Breast epithelium (tissue), 4 donors: ENCODE measurements at regions of chr2 and their contacts with region 1.

Region 1: GRCh38 chr2:98538280-98539041 is 69.9 kb downstream of the COA5 start:
- DNase-seq: no peak
- H3K4me3 ChIP-seq: no peak overlapping the region
- H3K27ac ChIP-seq: no peak overlapping the region
- H3K4me1 ChIP-seq: no peaks in the 10 kb centered on the region
- H3K27me3 ChIP-seq: no peaks in the 10 kb centered on the region
- CTCF ChIP-seq: no peak
- POLR2A ChIP-seq: no peak

Region 2: DNA sequence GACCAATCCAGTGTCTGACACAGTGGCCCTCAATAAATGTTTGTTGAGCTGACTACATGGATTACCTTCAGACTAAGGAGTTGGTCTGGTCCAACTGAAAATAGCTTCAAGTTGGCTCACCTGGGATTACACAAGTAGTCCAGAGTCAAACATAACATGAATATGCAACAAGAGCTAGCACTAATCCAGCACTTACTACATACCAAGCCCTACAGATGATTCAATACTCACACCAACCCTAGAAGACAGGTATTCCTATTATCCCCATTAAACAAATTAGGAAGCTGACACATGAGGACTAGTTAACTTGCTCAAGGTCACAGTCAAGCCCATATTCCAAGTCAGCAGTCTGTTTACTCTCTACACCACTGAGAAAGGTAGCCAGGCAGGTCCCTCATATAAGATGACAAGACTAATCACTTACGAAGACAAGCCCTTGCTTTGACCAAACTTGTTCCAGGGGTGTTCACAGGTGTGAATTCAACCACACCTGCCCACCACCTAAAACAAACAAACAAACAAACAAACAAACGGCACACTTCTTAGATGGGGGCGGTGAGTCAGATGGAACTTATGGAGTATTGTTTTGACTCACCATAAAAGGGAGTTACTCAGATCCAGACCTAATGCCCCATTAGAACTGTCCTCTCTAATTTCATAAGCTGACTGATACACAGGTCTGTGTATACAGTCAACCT is 571.8 kb before region 1 on chr2:
- intact Hi-C with region 1: no loop called
- DNase-seq: no peak
- H3K4me3 ChIP-seq: no peak overlapping the region
- H3K27ac ChIP-seq: no peak overlapping the region
- H3K4me1 ChIP-seq: no peaks in the 10 kb centered on the region
- H3K27me3 ChIP-seq: no peaks in the 10 kb centered on the region
- CTCF ChIP-seq: no peak
- POLR2A ChIP-seq: no peak

Region 3: GRCh38 chr2:98234776-98235175 is 303.7 kb before region 1 on chr2:
- intact Hi-C with region 1: no loop called
- DNase-seq: no peak
- H3K4me3 ChIP-seq: no peak overlapping the region
- H3K27ac ChIP-seq: no peak overlapping the region
- H3K4me1 ChIP-seq: no peaks in the 10 kb centered on the region
- H3K27me3 ChIP-seq: no peaks in the 10 kb centered on the region
- CTCF ChIP-seq: no peak
- POLR2A ChIP-seq: no peak

Region 4: GRCh38 chr2:98559581-98559980 is 21.1 kb after region 1 on chr2:
- intact Hi-C with region 1: loop called (anchors 1 kb)
- DNase-seq: no peak
- H3K4me3 ChIP-seq: no peak overlapping the region
- H3K27ac ChIP-seq: no peak overlapping the region
- H3K4me1 ChIP-seq: no peaks in the 10 kb centered on the region
- H3K27me3 ChIP-seq: no peaks in the 10 kb centered on the region
- CTCF ChIP-seq: no peak
- POLR2A ChIP-seq: no peak